CD4-positive, alpha-beta T cell (primary cell): ENCODE measurements at regions of chr10 and their contacts with region 1.

Region 1: DNA sequence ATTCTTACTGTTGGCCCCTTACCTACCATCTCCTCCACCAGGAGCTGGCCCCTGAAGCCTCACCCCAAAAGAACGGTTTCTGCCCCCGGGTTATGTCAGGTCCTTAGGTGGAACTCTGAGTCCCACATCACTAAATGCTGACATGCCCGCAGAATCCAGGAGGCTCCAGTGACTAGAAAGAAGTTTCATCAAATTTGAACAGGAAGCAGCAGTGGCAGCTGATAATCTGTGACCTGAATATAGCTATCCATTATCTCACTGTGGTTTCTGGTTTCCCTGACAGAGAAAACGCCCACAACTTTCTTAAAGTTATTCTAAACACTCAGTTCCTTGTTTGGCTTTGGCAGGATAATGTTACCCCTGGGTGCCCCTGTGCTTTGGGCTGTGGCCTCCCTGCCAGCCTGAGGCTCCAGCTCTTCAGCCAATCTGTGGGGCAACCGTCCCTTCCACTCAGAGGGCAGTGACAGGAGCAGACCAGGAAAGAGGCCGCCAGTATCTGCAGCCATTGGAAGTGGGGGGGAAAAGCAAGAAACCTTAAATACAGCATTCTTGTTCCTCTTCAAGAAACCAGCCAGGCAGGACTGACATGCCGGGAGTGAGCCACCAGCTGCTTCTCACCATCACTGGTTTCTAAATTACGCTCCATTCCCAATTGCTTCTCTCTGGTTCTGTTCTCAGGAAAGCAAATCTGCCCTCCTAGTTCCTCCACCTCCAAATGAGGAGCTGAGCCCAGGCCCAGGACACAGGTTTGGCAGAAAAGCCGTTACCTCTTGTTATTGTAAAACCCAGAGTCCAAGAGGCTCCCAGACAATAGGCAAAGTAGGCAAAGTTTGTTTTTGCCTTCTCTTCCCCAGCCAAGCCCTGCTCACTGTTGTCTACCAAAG is 41.2 kb upstream of the VCL start:
- DNase-seq: peak in 6 of 14 experiments; percentile 12 to 91 (median 54)
- ATAC-seq: peak; percentile 78
- H3K4me3 ChIP-seq: peak overlapping the region; percentile 19
- H3K4me3 Mint-ChIP-seq: peak overlapping the region; percentile 69
- H3K27ac ChIP-seq: peak overlapping the region; percentile 57 to 62
- H3K27ac Mint-ChIP-seq: peak overlapping the region; percentile 92
- H3K4me1 ChIP-seq: peaks cover 63% of the 10 kb centered on the region
- H3K4me1 Mint-ChIP-seq: peaks cover 58% of the 10 kb centered on the region
- H3K27me3 ChIP-seq: no peaks in the 10 kb centered on the region
- H3K27me3 Mint-ChIP-seq: no peaks in the 10 kb centered on the region
- CTCF ChIP-seq: no peak

Region 2: DNA sequence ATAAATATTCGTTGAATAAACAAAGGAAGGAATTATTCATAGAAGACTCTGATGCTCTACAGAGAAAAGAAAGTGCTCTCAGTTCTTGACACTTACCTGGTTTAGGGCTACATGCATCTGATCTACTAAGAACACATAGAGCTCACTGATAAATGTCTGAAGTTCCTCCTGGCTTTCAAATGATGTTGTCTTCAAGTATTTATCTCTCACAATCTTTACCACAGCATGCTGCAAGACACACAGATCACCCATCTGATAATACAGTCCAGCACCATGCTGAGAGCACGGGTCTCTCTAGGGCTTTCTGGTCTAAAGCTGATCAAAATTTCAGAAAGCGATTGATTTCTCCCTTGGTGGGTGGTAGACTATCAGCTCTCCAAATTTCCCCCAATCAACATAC is 659.8 kb before region 1 on chr10:
- CTCF ChIA-PET with region 1: no interaction called
- POLR2A ChIA-PET with region 1: no interaction called
- intact Hi-C with region 1: no loop called
- DNase-seq: peak in 2 of 14 experiments; percentile 3 to 5
- ATAC-seq: no peak
- H3K4me3 ChIP-seq: no peak overlapping the region
- H3K4me3 Mint-ChIP-seq: no peak overlapping the region
- H3K27ac ChIP-seq: no peak overlapping the region
- H3K27ac Mint-ChIP-seq: no peak overlapping the region
- H3K4me1 ChIP-seq: no peaks in the 10 kb centered on the region
- H3K4me1 Mint-ChIP-seq: no peaks in the 10 kb centered on the region
- H3K27me3 ChIP-seq: no peaks in the 10 kb centered on the region
- H3K27me3 Mint-ChIP-seq: no peaks in the 10 kb centered on the region
- CTCF ChIP-seq: no peak

Region 3: DNA sequence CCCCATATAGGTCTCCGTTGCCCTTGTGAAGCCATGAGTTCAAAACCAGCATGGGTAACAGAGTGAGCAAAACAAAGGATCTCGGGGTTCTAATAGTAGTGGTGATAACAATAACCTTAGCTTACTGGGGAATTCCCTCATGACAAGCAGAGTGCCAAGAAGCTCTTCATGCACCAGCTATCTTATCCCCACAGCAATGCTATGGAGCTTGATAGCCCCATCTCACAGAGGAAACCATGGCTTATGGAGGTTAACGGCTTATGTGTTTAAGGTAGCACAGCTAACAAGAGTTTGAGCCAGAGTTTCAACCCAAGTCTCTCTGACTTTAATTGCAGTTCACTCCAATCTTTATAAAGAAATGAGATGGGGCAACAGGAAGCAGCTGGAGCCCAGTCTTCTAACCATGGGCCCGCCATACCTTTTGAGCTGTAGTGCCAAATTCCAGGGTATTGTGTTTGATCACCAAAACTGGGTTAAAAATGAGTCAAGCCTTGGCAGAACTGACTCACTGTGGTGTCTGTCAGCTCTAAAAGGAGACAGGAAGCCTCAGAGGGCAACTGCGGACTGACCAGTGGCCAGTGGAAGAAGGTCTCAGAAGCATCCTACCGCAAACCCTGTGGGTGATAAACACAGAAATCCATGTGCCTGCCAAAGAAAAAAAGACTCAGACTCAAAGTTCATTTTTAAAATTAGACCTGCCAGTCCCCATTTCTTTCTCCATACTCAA is 62.3 kb before region 1 on chr10:
- CTCF ChIA-PET with region 1: no interaction called
- POLR2A ChIA-PET with region 1: no interaction called
- intact Hi-C with region 1: no loop called
- DNase-seq: peak in 1 of 14 experiments; percentile 28
- ATAC-seq: no peak
- H3K4me3 ChIP-seq: no peak overlapping the region
- H3K4me3 Mint-ChIP-seq: no peak overlapping the region
- H3K27ac ChIP-seq: no peak overlapping the region
- H3K27ac Mint-ChIP-seq: no peak overlapping the region
- H3K4me1 ChIP-seq: no peaks in the 10 kb centered on the region
- H3K4me1 Mint-ChIP-seq: no peaks in the 10 kb centered on the region
- H3K27me3 ChIP-seq: no peaks in the 10 kb centered on the region
- H3K27me3 Mint-ChIP-seq: no peaks in the 10 kb centered on the region
- CTCF ChIP-seq: no peak

Region 4: DNA sequence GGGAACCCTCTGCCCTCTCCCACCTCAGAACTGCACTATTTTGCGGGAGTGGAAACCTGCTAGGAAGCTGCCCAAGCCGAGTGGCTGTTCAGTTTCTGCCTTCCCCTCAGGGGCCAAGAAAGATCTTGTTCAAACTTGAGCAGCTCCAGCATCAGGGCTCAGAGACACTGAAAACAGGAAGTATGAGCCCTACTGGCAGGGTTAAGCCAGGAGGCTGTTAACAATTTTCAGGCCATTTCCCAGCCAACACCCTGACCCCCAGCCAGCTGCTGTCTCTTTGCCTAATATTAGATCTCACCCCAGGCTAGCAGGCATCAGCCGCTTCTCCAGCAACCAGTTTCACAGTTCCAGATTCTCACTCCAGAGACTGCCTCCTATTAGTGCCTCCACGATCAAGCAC is 36.6 kb before region 1 on chr10:
- CTCF ChIA-PET with region 1: no interaction called
- POLR2A ChIA-PET with region 1: interaction called, 3 read pairs
- intact Hi-C with region 1: loop called in 1 of 2 experiments (anchors 5 kb)
- DNase-seq: peak in 3 of 14 experiments; percentile 17 to 39 (median 33)
- ATAC-seq: peak; percentile 30
- H3K4me3 ChIP-seq: no peak overlapping the region
- H3K4me3 Mint-ChIP-seq: peak overlapping the region; percentile 64
- H3K27ac ChIP-seq: no peak overlapping the region
- H3K27ac Mint-ChIP-seq: no peak overlapping the region
- H3K4me1 ChIP-seq: peaks cover 37% of the 10 kb centered on the region
- H3K4me1 Mint-ChIP-seq: peaks cover 28% of the 10 kb centered on the region
- H3K27me3 ChIP-seq: peaks cover 0 to 9% of the 10 kb centered on the region in 2 experiments
- H3K27me3 Mint-ChIP-seq: peaks cover 32% of the 10 kb centered on the region
- CTCF ChIP-seq: no peak

Region 5: DNA sequence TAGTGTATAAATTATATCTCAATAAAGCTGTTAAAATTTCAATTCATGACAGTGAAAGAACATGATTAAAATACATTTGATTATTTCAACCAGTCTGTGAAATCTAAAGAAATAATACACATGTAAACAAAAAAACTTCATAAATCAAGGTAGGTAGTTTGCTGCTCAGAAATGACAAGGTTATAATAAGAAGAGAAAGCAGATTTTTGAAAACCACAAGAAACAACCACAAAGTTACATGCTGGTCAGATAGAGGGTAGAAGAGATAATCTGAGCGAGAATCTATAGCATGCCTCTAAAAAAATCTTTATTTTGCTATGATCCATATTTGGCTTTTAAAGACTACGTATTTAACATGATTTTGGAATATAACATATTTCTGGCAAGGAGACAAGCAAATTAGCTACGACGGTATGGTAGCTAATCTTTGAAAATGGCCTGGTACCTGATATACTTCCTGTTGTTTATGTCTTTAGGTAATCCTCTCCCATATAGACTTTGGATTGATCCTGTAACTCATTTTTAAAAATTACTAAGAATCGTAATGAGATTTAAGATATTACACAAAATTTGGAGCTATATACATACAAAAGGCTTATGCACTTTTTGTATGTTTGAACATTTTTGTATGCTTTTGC is 17.7 kb after region 1 on chr10:
- CTCF ChIA-PET with region 1: interaction called, 4 read pairs
- POLR2A ChIA-PET with region 1: interaction called, 10 read pairs
- intact Hi-C with region 1: no loop called
- DNase-seq: peak in 3 of 14 experiments; percentile 36 to 70 (median 37)
- ATAC-seq: peak; percentile 69
- H3K4me3 ChIP-seq: peak overlapping the region; percentile 5
- H3K4me3 Mint-ChIP-seq: peak overlapping the region; percentile 21
- H3K27ac ChIP-seq: no peak overlapping the region
- H3K27ac Mint-ChIP-seq: peak overlapping the region; percentile 38
- H3K4me1 ChIP-seq: peaks cover 16% of the 10 kb centered on the region
- H3K4me1 Mint-ChIP-seq: peaks cover 19% of the 10 kb centered on the region
- H3K27me3 ChIP-seq: no peaks in the 10 kb centered on the region
- H3K27me3 Mint-ChIP-seq: no peaks in the 10 kb centered on the region
- CTCF ChIP-seq: no peak

Region 6: DNA sequence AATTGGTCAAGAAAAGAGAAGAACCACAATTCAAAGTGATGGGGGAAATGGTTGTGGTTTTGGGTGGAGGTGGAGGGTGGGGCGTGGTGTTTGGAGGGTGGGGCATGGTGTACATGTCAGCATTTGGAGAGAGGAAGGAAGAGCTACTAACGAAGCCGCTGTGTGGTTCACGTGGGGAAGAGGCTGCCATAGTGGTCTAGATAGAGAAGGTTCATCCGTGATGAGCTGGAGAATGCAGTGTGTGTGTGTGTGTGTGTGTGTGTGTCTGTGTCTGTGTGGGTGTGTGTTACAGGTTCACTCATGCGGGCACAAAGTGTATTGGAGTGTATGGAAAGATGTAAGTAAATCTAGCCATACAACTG is 35.1 kb after region 1 on chr10:
- CTCF ChIA-PET with region 1: interaction called, 3 read pairs
- POLR2A ChIA-PET with region 1: interaction called, 17 read pairs
- intact Hi-C with region 1: loop called (anchors 2 to 5 kb)
- DNase-seq: peak; percentile 64 to 94 (median 74)
- ATAC-seq: peak; percentile 100
- H3K4me3 ChIP-seq: no peak overlapping the region
- H3K4me3 Mint-ChIP-seq: peak overlapping the region; percentile 32
- H3K27ac ChIP-seq: peak overlapping the region in 1 of 2 donors; percentile 44
- H3K27ac Mint-ChIP-seq: peak overlapping the region; percentile 46
- H3K4me1 ChIP-seq: peaks cover 40% of the 10 kb centered on the region
- H3K4me1 Mint-ChIP-seq: peaks cover 56% of the 10 kb centered on the region
- H3K27me3 ChIP-seq: no peaks in the 10 kb centered on the region
- H3K27me3 Mint-ChIP-seq: no peaks in the 10 kb centered on the region
- CTCF ChIP-seq: no peak

Region 7: GRCh38 chr10:73997787-73998622 is 41.3 kb after region 1 on chr10 and contains the start of gene VCL:
- CTCF ChIA-PET with region 1: interaction called, 3 read pairs
- POLR2A ChIA-PET with region 1: interaction called, 17 read pairs
- intact Hi-C with region 1: loop called (anchors 2 to 5 kb)
- DNase-seq: peak; percentile 88 to 98 (median 94)
- ATAC-seq: peak; percentile 95
- H3K4me3 ChIP-seq: peak within 1 kb of the TSS; percentile 95
- H3K4me3 Mint-ChIP-seq: peak within 1 kb of the TSS; percentile 100
- H3K27ac ChIP-seq: peak within 1 kb of the TSS; percentile 45 to 84
- H3K27ac Mint-ChIP-seq: peak within 1 kb of the TSS; percentile 83
- H3K4me1 ChIP-seq: peaks cover 42% of the 10 kb centered on the region
- H3K4me1 Mint-ChIP-seq: peaks cover 62% of the 10 kb centered on the region
- H3K27me3 ChIP-seq: no peaks in the 10 kb centered on the region
- H3K27me3 Mint-ChIP-seq: no peaks in the 10 kb centered on the region
- CTCF ChIP-seq: no peak
- total RNA-seq, gene VCL: 18.5 to 19.7 TPM

Region 8: GRCh38 chr10:74035303-74035702 is 78.6 kb after region 1 on chr10:
- CTCF ChIA-PET with region 1: no interaction called
- POLR2A ChIA-PET with region 1: interaction called, 3 read pairs
- intact Hi-C with region 1: loop called in 1 of 2 experiments (anchors 5 kb)
- DNase-seq: peak in 3 of 14 experiments; percentile 27 to 37 (median 27)
- ATAC-seq: no peak
- H3K4me3 ChIP-seq: no peak overlapping the region
- H3K4me3 Mint-ChIP-seq: no peak overlapping the region
- H3K27ac ChIP-seq: no peak overlapping the region
- H3K27ac Mint-ChIP-seq: peak overlapping the region; percentile 64
- H3K4me1 ChIP-seq: peaks cover 9% of the 10 kb centered on the region
- H3K4me1 Mint-ChIP-seq: peaks cover 52% of the 10 kb centered on the region
- H3K27me3 ChIP-seq: no peaks in the 10 kb centered on the region
- H3K27me3 Mint-ChIP-seq: no peaks in the 10 kb centered on the region
- CTCF ChIP-seq: peak; percentile 39

Region 9: GRCh38 chr10:74047868-74048267 is 91.2 kb after region 1 on chr10:
- CTCF ChIA-PET with region 1: no interaction called
- POLR2A ChIA-PET with region 1: no interaction called
- intact Hi-C with region 1: loop called in 1 of 2 experiments (anchors 5 kb)
- DNase-seq: no peak
- ATAC-seq: no peak
- H3K4me3 ChIP-seq: no peak overlapping the region
- H3K4me3 Mint-ChIP-seq: no peak overlapping the region
- H3K27ac ChIP-seq: no peak overlapping the region
- H3K27ac Mint-ChIP-seq: no peak overlapping the region
- H3K4me1 ChIP-seq: no peaks in the 10 kb centered on the region
- H3K4me1 Mint-ChIP-seq: peaks cover 10% of the 10 kb centered on the region
- H3K27me3 ChIP-seq: no peaks in the 10 kb centered on the region
- H3K27me3 Mint-ChIP-seq: no peaks in the 10 kb centered on the region
- CTCF ChIP-seq: no peak